GM10248 (cell line): ENCODE measurements at regions of chr13 and their contacts with region 1.

Region 1: GRCh38 chr13:73754727-73755292 is 379.4 kb downstream of the KLF12 start:
- DNase-seq: peak; percentile 31
- CTCF ChIP-seq: peak; percentile 61

Region 2: DNA sequence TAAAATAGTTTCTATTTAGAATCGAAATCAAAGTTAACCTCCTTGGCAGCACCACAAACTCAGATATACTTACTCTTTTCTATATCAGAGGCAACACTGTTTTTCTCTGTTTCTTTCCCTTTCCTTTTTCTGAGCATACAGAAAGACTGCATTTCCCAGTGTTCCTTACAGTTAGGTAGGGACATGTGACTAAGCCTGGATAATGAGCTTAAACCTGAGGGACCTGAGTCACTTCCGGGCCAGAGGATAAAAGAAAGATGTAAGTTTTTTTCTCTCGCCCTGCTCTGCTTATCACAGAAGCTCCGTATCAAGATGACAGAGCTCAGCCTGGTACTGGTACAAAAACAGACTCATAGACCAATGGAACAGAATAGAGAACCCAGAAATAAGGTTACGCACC is 152.5 kb before region 1 on chr13:
- CTCF ChIA-PET with region 1: no interaction called
- POLR2A ChIA-PET with region 1: no interaction called
- DNase-seq: no peak
- CTCF ChIP-seq: no peak

Region 3: GRCh38 chr13:73731564-73731963 is 23.2 kb before region 1 on chr13:
- CTCF ChIA-PET with region 1: interaction called, 18 read pairs
- POLR2A ChIA-PET with region 1: no interaction called
- DNase-seq: no peak
- CTCF ChIP-seq: no peak

Region 4: DNA sequence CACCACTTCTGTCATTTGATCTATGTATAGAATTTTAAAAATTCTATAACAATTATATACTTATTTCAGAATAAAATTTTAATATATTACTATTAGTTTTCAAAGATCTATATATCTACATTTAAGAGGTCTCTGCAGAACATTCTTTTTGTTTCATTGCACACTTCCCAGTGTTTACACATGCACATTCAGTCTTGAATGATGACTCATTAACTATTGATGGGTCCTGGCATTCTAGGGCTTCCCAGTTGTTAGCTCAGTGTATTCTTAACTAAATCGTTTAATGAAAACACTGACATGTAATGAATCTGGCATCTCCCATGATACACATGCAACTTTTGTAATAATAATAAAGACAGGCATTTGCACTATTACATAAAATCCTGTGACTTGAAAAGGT is 54.8 kb after region 1 on chr13:
- CTCF ChIA-PET with region 1: no interaction called
- POLR2A ChIA-PET with region 1: no interaction called
- DNase-seq: no peak
- CTCF ChIP-seq: no peak

Region 5: DNA sequence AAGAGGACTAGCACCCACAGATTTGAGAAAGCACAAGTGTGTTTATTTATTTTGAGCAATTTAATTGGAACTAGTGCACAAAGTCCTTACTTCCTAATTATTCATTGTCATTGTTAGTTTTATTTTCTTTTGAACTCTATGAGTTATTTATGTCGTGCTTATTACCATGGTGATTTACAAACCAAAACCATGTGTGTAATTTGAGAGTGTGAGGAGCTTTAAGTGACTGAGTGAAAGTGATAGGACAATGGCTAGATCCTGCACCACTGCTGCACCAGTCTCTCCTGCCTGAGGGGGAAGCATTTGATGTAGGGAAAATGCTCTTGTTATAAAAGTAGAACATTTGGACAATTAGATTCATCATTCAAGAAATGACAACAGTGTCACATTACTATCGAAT is 551.7 kb after region 1 on chr13:
- CTCF ChIA-PET with region 1: no interaction called
- POLR2A ChIA-PET with region 1: no interaction called
- DNase-seq: no peak
- CTCF ChIP-seq: no peak

Region 6: DNA sequence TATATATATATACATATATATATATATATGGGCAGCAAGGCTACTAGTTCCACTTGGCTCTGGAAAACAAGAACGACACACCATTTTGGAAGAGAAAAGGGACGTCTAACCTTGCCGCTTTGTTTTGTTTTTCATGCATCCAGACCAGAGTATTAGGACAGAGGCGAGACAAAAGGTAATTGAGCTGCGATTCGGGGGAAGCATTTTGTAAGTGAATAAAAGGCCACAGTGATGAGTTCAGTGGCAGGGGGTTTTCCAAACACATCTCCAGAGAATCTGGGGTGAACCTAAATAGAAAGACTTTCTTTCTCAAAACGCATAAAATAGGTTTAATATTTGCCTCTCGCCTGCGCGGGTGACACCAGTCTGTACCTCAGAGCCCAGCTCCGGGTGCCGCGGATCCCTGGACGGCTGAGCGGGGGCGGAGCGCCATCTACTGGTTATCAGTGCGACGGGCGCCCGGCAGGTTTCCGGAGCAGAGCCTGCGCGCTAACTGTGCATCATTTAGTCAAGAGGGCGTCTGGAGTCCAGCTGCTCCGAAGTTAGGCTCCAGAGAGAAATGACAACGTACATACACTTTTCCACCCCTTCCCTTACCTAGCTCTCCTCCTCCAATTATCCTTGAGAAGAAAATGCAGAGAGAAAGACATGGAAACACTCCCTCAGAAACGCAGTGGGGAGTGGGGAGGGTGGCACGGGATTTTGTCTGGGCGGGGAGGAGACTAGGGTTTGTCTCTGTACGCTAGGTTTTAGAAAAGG is 1464.8 kb after region 1 on chr13:
- CTCF ChIA-PET with region 1: interaction called, 11 read pairs
- POLR2A ChIA-PET with region 1: no interaction called
- DNase-seq: peak; percentile 87
- CTCF ChIP-seq: peak; percentile 98